ENCODE measurements at regions of chr12 and their contacts with region 1.

Region 1: DNA sequence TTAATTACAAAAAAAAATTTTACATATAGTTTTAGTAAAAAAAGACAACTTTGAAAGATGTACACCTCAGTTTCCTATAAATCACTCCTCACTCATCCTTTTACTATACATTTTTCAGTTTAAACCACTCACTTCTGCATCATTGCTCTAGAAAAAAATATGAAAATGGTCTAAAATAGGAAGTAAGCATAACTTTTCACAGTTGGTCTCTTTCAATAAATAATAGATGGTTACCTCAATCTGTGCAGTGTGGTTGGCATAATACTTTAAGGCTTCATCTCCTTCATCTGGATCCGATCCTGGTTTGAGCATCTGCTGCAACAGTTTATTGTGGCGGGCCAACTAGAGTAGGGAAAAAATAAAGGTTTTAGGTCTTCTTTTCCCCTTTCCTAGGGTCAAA is 247.9 kb downstream of the SSPN start:
- DNase-seq: no peak
- H3K4me3 ChIP-seq: no peak overlapping the region
- H3K27ac ChIP-seq: no peak overlapping the region
- H3K4me1 ChIP-seq: no peaks in the 10 kb centered on the region
- H3K27me3 ChIP-seq: no peaks in the 10 kb centered on the region
- CTCF ChIP-seq: no peak

Region 2: DNA sequence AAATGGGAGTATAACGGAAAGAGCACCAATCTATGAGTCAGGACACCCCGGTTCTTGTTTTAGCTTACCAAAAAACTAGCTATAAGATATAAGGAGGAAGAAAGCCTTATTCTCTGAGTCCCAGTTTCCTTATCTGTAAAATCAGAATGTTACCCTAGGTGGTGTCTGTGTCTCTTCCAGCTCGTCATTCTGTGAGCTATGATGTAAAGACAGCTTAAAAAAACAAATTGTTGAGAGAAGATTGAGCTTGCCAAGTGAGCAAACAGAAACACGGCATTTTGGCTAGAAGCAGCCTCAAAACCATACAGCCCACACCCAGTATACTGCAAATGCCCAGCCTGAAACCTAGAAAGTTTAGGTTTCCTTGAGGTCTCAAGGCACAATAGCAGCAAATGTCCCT is 96.6 kb before region 1 on chr12:
- CTCF ChIA-PET with region 1: no interaction called
- POLR2A ChIA-PET with region 1: interaction called, 12 read pairs
- intact Hi-C with region 1: no loop called
- DNase-seq: no peak
- H3K4me3 ChIP-seq: no peak overlapping the region
- H3K27ac ChIP-seq: no peak overlapping the region
- H3K4me1 ChIP-seq: no peaks in the 10 kb centered on the region; the same call in 1 of the 2 replicates
- H3K27me3 ChIP-seq: no peaks in the 10 kb centered on the region
- CTCF ChIP-seq: no peak